ENCODE measurements at regions of chr7 and their contacts with region 1.

Region 1: GRCh38 chr7:94295850-94296249 is 98.8 kb upstream of the COL1A2 start:
- DNase-seq: no peak
- ATAC-seq: peak; percentile 80

Region 2: DNA sequence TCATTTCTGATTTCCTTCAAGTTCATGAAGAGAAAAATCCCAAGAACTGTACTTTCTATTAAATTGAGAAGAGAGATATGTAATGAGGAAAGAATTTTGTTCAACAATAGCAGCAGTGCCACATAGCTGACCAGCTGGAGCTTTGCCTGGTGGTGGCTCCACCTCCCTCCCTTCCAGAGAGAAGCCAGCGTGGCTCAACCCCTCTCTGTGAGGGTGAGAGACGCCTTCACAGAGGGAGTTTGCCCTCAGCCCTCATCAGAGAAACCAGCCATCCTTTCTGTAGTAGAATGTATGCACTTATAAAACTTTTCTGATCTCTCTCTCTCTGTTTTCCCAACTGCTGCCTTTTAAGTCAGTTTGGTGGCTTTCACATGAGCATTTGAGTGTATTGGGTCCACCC is 78.4 kb after region 1 on chr7:
- intact Hi-C with region 1: loop called (anchors 2 kb)
- DNase-seq: peak; percentile 83
- ATAC-seq: peak; percentile 86

Region 3: DNA sequence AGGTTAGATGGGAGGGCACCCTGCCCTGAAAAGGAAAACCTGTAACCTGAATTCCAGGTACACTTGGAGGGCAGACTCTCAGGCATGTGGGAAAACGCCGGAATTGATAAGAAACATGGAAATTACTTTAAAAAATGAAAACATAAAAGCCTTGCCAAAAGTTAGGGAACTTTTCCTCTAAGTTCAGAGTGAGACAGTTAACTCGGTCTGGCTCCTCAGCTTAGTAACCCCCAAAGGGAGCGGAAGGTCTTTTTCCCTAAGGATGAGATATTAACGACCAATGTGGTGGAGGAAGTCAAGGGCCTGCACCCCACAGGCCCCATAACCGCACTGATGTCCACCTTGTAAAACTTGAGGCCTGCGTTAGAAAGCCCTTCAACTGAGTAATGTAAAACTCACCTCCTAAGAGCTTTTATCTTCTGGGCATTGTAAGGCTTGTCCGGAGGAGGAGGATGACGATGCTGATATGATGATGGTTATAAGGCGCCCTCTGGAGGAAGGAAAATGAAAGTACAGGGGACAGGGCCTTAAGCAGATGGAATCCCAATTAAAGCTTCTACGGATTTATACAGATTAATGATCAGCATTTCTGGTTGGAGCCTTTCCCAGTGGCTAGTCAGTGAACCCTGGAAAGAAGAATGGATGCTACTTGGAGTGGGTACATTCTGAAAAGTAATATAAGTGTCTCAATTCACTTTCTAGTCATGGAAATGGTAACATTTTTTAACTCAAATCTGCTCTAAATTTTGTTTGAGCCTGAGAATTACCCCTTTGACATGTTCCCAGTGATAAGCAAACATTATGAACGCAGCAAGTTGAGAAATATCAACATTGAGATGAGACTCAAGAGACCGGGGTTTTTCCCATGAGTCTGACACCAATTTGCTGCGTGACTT is 99.5 kb after region 1 on chr7:
- intact Hi-C with region 1: loop called (anchors 1 kb)
- DNase-seq: no peak
- ATAC-seq: peak; percentile 76

Region 4: GRCh38 chr7:95476904-95477594 is 1181.2 kb after region 1 on chr7:
- intact Hi-C with region 1: loop called (anchors 5 kb)
- DNase-seq: no peak
- ATAC-seq: peak; percentile 73

Measured in Right ventricle myocardium inferior (tissue), 1 donor.